Activated naive CD4-positive, alpha-beta T cell treated with anti-CD3 and anti-CD28 coated beads, Interleukin-2, amount 10 ng/mL, durations not matched to agents 7 days and 5 days (primary cell): ENCODE measurements at regions of chr7 and their contacts with region 1.

Region 1: GRCh38 chr7:77247206-77247850 is 47.7 kb upstream of the FGL2 start:
- DNase-seq: peak; percentile 93
- H3K4me3 Mint-ChIP-seq: no peak overlapping the region
- H3K27ac Mint-ChIP-seq: no peak overlapping the region
- H3K4me1 Mint-ChIP-seq: peaks cover 4% of the 10 kb centered on the region
- H3K27me3 Mint-ChIP-seq: no peaks in the 10 kb centered on the region

Region 2: DNA sequence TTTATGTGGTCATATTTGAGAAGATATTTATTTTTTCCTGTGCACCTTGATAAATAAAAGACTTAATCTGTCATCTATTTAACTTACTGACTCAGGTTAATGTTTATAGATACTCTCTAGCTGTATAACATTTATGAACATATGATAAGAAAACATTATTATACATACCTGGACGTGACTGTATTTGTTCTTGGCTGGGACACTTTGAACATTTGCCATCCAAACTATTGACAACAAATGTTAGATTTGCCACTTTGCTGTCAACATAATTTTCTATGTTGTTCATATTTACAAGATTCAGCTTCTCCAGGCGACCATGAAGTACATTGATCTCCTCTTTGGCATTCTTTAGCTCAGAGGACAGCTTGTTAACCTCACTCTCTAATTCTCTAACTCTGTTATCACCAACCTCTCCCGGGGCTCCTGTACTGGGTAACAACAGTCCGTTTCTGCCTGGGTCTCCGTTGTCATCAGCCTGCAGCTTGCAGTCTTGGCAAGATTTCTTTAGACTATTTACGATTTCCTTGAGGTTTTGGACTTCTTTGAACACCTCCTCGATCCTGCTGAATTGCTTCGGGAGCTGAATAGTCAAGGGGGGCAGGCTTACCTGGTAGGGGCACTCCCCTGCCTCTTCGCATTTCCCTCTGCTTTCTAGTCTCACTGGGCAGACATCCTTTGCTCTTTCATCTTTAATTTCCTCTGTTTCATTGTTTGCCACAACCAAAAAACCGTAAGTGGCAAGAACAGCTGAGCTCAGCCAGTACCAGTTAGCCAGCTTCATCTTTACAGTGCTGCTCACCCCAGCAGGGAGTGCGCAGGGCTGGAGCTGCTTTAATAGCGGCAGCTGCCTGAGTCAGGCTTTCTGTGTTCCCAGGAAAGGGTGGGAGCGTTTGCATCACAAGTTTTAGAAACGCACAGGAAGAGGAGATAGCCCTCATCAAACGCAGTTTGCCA is 48.0 kb before region 1 on chr7 and contains the start of gene FGL2:
- CTCF ChIA-PET with region 1: interaction called, 10 read pairs
- DNase-seq: peak; percentile 56
- H3K4me3 Mint-ChIP-seq: peak within 1 kb of the TSS; percentile 63
- H3K27ac Mint-ChIP-seq: peak within 1 kb of the TSS; percentile 67
- H3K4me1 Mint-ChIP-seq: peaks cover 35% of the 10 kb centered on the region
- H3K27me3 Mint-ChIP-seq: peaks cover 5% of the 10 kb centered on the region

Region 3: DNA sequence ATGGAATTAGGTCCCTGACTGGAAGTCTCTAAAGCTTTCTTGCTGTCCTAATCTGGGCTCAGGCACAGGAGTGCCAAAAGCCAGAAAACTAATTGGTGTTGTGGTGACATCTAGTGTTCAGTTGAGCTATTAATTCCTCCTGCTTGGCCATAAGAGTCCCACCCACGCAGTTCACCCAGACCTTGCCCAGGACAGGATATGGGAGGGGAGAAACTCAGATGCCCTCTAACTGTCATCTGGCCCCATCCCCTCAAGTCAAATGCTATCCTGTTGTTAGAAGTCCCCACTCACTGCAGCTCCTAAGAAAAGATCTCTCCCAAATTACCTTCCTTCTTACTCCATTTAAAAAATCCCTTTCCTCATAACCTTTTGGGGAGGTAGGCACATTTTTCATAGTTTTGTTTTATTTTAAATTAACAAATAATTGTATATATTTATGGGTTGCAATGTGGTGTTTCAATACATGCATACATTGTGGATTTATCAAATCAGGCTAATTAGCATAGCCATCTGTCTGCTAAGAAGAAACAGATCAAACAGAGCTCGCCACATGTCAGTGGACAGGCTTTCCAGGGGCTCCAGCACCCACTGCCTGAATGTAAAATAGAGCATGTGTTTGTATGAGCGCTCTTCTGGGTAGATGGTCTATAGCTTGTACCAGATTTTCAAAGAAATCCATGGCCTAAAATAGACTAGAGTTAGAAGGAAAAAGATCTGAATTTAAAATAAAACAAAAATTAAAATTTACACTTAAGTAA is 84.8 kb after region 1 on chr7:
- CTCF ChIA-PET with region 1: interaction called, 33 read pairs
- DNase-seq: peak; percentile 60
- H3K4me3 Mint-ChIP-seq: no peak overlapping the region
- H3K27ac Mint-ChIP-seq: no peak overlapping the region
- H3K4me1 Mint-ChIP-seq: peaks cover 52% of the 10 kb centered on the region
- H3K27me3 Mint-ChIP-seq: no peaks in the 10 kb centered on the region